ENCODE measurements at regions of chr17 and their contacts with region 1.

Region 1: DNA sequence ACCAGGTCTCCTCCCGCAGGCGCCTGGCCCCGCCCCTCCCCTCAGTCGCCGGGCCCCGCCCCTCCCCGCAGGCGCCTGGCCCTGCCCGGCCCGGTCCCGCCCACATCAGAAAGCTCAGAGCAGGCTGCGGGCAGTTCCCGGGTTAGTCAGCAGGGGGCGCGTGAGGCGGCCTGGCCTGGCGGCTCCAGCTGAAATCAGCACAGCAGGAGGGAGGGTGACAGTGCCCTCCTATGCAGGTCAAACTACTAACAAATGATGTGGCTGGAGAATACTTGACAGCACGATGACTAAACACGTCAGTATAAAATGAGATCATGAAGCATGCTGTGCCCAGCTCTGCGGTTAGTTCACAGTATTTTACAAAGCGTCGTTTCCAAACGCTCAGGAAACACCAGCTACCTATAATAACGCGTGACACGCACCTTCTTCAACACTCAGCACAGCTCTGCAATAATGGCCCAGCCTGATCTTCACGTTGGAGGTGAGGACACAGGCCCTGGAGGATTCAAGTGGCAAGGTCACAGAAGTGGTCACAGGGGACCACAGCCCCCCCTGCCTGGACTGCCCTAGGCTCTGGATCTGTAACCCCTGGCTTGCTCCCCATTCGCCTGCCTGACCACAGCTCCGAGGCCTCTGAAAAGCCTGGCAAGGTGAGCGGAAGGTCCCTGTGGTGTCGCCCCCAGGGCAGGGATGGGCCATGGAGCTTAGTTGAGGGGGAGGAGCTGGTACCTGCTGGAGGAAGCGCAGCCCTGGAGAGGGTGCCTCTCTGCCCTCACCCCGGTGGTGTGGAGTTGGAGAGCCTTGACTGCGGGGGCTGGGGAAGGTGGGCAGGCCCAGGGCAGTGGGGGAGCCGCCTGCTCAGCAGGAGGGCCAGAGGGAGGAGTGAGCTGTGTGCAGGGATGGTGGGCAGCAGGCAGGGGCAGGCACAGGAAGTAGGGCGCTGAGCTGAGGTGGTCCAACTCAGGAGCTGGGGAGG is 81.2 kb downstream of the KCNJ12 start:
- DNase-seq: peak; percentile 73 to 98 (median 86)

Region 2: DNA sequence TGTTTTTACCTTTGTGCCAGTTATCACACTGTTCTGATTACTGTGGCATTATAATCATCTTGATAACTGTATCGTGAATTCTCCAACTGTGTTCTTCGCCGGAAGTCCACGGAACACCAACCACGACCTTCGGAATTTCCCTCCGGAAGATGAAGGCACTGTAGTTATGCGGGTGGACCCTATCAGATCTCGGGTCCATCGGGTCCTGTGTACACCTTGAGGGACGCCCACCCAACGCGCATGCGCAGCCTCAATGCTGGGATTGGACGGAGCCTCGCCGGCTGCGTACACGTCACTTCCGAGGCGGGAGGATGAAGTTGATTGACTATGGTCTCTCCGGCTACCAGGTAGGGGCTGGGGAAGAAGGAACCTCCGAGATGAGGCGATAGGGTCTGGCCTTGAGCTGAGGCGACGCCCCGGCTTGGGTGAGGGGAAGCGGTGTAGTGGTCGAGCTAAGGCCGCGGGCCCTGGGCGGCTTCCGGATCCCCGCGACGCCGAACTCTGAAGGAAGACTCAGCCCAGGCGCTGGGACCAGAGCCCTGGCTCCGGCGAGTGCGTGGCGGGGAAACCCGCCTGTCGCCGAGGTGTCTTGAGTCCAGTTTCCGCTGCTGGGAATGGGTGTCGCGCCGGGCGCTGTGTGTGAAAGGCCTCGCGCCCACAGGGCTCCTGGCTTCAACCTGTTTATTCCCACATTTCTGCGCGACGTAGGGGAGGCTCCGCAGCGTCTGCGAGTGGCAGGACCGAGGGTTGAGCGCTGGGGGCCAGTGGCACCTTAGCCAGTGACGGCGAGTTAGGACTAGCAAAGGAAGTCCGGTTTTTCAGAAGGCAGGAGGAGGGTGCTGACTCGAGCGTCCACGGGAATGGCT is 330.5 kb before region 1 on chr17 and contains the start of gene DHRS7B:
- intact Hi-C with region 1: loop called (anchors 5 kb)
- DNase-seq: peak; percentile 93 to 99 (median 96)

Region 3: DNA sequence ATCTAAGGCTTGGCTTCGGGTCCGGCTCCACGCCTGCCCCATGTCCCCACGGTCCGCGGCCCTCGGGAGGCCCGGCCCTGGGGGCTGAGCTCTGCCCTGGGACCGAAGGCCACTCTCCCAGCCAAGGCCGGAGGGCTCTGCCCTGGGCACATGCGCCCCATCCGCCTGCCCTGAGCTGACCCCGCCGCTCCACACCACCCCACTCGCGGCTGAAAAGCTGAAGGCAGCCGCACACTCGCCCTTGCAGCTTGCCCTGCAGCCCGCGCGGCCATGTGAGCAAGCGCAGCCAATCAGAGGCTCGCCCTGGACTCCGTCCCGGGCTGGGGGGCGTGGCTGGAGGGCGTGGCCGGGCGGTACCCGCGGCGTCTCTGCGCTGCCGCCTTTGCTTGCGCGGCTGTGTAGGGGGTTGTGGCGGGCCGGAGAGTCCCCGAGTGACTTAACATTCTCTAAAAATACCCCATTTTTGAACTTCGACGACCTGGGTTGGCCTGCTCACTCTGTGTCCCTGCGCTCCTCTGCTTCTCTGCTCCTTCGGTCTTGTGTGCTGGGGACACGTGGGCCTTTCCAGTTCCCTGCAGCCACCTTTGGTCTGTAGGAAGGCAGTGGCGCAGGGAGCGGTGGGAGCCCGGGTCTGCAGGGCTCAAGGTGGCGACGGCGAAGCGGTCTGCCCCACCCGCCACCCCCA is 181.6 kb before region 1 on chr17:
- intact Hi-C with region 1: loop called (anchors 5 kb)
- DNase-seq: peak; percentile 93 to 100 (median 96)

Region 4: DNA sequence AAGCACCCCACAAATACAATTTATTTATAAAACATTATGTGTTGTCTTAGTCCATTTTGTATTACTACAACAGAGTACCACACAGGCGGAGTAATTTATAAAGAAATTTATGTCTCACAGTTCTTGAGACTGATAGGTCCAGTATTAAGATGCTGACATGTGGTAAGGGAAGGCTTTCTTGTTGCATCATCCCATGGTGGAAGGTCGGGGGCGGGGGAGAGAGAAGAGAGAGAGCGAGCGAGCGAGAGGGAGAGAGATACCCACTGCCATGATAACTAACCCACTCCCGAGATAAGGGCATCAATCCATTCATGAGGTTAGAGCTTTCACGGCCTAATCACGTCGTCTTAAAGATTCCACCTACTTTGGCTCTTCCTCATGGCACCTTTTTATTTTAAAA is 36.7 kb after region 1 on chr17:
- intact Hi-C with region 1: loop called (anchors 5 kb)
- DNase-seq: no peak

Region 5: DNA sequence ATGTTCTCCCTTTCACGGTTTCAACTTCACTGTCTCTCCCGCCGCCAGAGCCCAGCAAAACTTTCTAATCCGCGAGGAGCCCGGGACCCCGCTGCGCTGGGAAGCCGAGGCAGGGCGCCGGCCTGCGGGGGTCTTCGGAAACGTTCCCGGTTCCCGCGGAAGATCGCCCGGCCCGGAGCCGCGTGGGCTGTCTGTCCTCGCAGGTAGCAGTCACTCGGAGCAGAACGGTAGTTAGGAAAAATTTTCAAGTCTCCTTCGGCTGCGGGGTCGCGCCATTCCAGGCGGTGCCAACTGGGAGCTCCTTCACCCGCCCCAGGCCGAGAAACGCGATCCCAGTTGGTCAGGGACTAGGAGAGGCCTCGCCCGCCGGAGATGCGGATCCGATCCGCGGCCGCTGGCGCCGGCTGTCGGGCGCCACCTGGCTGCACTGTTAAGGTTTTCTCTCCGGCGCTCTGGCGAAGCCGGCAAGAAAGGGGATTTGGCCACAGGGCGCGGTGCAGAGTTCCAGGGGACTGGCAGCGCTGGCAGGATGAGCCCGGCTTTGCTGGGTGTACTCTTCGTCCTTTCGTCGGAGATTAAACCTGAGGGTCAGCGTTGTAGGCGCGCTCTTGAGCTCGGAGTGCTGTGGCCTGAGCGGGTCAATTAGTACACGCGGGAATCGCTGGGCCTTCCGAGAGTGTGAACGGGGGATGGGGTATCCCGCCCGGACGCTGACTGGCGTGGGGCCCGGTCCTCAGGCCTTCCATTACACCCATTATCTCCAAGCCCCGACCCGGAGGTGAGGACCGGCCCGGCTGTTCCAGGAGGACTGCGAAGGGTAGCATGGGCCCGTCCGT is 54.2 kb after region 1 on chr17:
- intact Hi-C with region 1: loop called (anchors 1 kb)
- DNase-seq: peak; percentile 71 to 96 (median 84)